ENCODE measurements at regions of chr2 and their contacts with region 1.

Region 1: DNA sequence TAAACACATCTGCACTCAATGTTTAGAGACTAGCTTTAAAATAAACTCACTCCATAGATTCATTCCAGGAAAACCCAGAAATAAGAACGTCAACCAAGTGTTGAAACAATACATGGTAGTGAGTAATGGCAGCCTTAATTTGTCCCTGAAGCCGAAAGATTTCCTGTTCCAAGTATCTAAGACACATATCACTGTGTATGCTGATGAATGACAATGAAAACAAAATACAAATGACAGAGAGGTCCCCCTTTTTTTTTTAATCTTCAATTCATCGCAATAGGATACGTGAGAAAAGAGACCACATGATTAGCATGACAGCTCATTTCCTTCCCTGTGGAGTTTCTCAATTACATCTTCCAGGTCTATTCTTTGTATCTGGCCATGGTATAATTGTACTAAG is 160.5 kb upstream of the STK17B start:
- DNase-seq: no peak
- H3K4me3 Mint-ChIP-seq: no peak overlapping the region
- H3K27ac Mint-ChIP-seq: no peak overlapping the region
- H3K4me1 Mint-ChIP-seq: no peaks in the 10 kb centered on the region
- H3K27me3 Mint-ChIP-seq: peaks cover 2% of the 10 kb centered on the region

Region 2: DNA sequence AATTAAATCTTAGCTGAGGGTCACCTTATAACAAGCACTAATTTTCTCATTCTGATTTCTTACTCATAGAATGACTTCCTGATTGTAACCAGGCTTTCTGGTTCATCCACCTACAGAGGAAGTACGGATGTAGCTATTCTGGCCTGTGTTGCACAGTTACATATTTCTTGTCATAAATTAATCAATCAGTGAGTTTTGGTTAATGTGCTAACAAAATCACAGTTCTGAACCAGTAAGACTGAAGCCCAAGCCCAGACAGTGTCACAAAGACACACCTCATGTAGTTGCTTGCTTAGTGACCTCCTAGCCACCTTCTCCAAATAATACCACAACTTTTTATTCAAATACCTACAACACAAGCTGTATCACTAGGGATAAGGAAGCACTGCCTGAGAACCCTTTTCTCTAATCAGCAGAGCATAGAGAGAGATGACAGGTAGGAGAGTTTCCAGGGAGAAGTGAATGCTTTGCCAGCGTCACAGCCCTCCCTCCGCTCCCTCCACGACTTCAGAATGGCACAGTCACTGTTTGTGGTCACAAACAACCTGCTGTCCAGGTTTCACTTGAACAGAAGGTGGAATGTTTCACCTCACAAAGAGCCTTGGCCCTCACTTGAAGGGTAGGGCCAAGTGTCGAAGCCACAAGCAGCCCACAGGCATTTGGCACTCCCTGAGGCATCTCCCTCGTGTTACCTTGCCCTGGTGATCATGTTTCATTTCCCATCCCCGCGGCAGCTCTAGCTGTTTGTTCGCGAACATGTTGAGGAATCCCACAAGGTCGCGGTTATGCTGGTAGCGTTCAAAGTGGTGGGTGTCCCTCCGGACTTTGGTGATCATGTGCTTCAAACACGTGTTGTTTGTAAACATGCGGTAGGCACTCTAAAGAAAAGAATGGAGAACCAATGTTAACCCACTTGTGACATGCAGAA is 39.7 kb before region 1 on chr2:
- intact Hi-C with region 1: loop called (anchors 2 kb)
- DNase-seq: no peak
- H3K4me3 Mint-ChIP-seq: no peak overlapping the region
- H3K27ac Mint-ChIP-seq: no peak overlapping the region
- H3K4me1 Mint-ChIP-seq: peaks cover 52% of the 10 kb centered on the region
- H3K27me3 Mint-ChIP-seq: no peaks in the 10 kb centered on the region

Region 3: GRCh38 chr2:196307775-196308305 is 24.0 kb before region 1 on chr2:
- intact Hi-C with region 1: loop called (anchors 2 kb)
- DNase-seq: no peak
- H3K4me3 Mint-ChIP-seq: no peak overlapping the region
- H3K27ac Mint-ChIP-seq: no peak overlapping the region
- H3K4me1 Mint-ChIP-seq: no peaks in the 10 kb centered on the region
- H3K27me3 Mint-ChIP-seq: peaks cover 2% of the 10 kb centered on the region

Measured in activated T-helper 1 cell treated with anti-CD3 and anti-CD28 coated beads, Interleukin-12 subunit alpha, Interleukin-12 subunit beta, Interleukin-2, Interleukin-4 antibody, amounts not matched to agents 30 ng/mL and 10 ng/mL and 1 ng/mL, durations not matched to agents 14 hours and 24 hours and 36 hours (primary cell).